Activated CD8-positive, alpha-beta memory T cell treated with anti-CD3 and anti-CD28 coated beads, Interleukin-2, amount 10 ng/mL, durations not matched to agents 7 days and 5 days (primary cell): ENCODE measurements at regions of chr17 and their contacts with region 1.

Region 1: DNA sequence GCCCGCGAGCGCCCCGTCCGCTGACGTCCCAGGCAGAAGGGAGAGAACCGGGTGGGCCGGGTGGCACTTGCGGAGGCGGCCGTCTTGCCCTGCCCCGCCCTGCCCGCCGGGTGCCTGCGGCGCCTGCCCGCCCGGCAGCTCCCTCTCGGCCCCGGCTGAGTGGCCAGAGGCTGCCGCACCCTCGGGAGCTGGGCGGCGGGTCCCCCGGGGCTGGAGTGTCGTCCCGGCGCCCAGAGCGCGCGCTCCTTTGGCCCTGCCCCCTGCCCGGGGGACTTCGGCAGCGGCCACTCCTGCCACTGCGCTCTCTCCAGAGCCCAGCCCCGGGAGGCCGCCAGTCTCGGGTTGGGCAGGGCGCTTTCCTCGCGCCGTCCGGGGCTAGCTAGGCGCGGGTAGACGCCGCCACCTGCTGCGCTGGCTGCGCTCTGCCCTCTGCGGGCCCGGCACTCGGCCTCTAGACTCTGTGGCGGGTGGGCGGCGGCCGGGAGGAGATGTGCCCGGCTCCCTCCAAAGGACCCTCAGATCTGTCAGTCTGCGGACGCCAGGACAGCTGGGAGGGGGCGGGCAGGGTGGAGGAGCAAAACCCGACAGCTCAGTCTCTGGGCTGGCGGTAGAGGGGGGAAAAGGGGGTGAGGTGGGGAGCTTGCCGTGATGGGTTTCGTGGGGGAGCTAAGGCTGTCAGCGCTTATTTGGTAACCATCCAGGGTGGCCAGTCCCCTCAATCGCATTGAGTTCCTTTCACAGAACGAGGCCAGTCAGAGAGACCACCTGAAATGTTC is at the start of gene ST6GALNAC2:
- DNase-seq: peak; percentile 51
- ATAC-seq: peak; percentile 80
- H3K4me3 Mint-ChIP-seq: peak within 1 kb of the TSS; percentile 38
- H3K27ac Mint-ChIP-seq: no peak within 1 kb of the TSS
- H3K4me1 Mint-ChIP-seq: peaks cover 6% of the 10 kb centered on the region
- H3K27me3 Mint-ChIP-seq: peaks cover 61% of the 10 kb centered on the region
- total RNA-seq, gene ST6GALNAC2: not detected

Region 2: GRCh38 chr17:76523084-76524037 is 62.6 kb before region 1 on chr17:
- CTCF ChIA-PET with region 1: interaction called, 14 read pairs
- DNase-seq: peak; percentile 85
- ATAC-seq: peak; percentile 88
- H3K4me3 Mint-ChIP-seq: peak overlapping the region; percentile 8
- H3K27ac Mint-ChIP-seq: no peak overlapping the region
- H3K4me1 Mint-ChIP-seq: peaks cover 15% of the 10 kb centered on the region
- H3K27me3 Mint-ChIP-seq: peaks cover 7% of the 10 kb centered on the region

Region 3: DNA sequence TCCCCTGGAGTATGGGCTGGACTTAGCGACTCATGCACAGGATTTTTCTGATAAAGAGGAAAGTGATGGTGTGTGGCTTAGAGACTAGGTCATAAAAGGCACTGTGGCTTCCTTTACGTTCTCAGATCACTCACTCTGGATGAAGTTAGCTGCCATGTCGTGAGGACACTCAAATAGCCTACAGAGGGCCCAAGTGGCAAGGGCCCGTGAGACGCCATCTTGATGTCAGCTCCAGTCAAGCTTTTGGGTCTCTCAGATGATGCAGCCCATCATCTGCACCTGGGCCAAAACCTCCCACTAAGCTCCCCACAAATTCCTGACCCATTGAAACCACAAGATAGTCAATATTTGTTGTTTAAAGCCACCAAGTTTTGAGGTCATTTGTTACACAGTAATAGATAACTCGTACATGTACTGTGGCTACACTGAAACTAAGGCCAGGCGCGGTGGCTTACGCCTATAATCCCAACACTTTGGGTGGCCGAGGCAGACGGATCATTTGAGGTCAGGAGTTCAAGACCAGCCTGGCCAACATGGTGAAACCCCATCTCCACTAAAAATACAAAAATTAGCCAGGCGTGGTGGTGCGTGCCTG is 15.0 kb before region 1 on chr17:
- CTCF ChIA-PET with region 1: no interaction called
- DNase-seq: no peak
- ATAC-seq: no peak
- H3K4me3 Mint-ChIP-seq: no peak overlapping the region
- H3K27ac Mint-ChIP-seq: no peak overlapping the region
- H3K4me1 Mint-ChIP-seq: peaks cover 3% of the 10 kb centered on the region
- H3K27me3 Mint-ChIP-seq: no peaks in the 10 kb centered on the region

Region 4: GRCh38 chr17:76791053-76791980 is 205.3 kb after region 1 on chr17:
- CTCF ChIA-PET with region 1: no interaction called
- DNase-seq: peak; percentile 57
- ATAC-seq: peak; percentile 81
- H3K4me3 Mint-ChIP-seq: no peak overlapping the region
- H3K27ac Mint-ChIP-seq: peak overlapping the region; percentile 7
- H3K4me1 Mint-ChIP-seq: peaks cover 14% of the 10 kb centered on the region
- H3K27me3 Mint-ChIP-seq: no peaks in the 10 kb centered on the region